HAP-1 (cell line): ENCODE measurements at regions of chr11 and their contacts with region 1.

Region 1: GRCh38 chr11:59822989-59823566 is 12.5 kb upstream of the MRPL16 start:
- DNase-seq: peak; percentile 65 to 82
- H3K4me3 ChIP-seq: no peak overlapping the region
- H3K4me1 ChIP-seq: peaks cover 9% of the 10 kb centered on the region
- H3K27me3 ChIP-seq: no peaks in the 10 kb centered on the region

Region 2: GRCh38 chr11:59545179-59546020 is 277.7 kb before region 1 on chr11:
- in situ Hi-C with region 1: no loop called
- DNase-seq: no peak
- H3K4me3 ChIP-seq: no peak overlapping the region
- H3K4me1 ChIP-seq: peaks cover 20% of the 10 kb centered on the region
- H3K27me3 ChIP-seq: no peaks in the 10 kb centered on the region

Region 3: GRCh38 chr11:60130496-60130895 is 307.4 kb after region 1 on chr11:
- in situ Hi-C with region 1: loop called (anchors 10 kb)
- DNase-seq: peak; percentile 81 to 91
- H3K4me3 ChIP-seq: no peak overlapping the region
- H3K4me1 ChIP-seq: peaks cover 35% of the 10 kb centered on the region
- H3K27me3 ChIP-seq: no peaks in the 10 kb centered on the region

Region 4: GRCh38 chr11:60251485-60252212 is 428.6 kb after region 1 on chr11:
- in situ Hi-C with region 1: loop called (anchors 10 kb)
- DNase-seq: peak; percentile 72 to 74
- H3K4me3 ChIP-seq: no peak overlapping the region
- H3K4me1 ChIP-seq: peaks cover 3% of the 10 kb centered on the region; the same call in 1 of the 2 replicates
- H3K27me3 ChIP-seq: no peaks in the 10 kb centered on the region